ENCODE measurements at regions of chr16 and their contacts with region 1.

Region 1: GRCh38 chr16:50152807-50153452 is at the start of gene TENT4B:
- DNase-seq: peak; percentile 79
- H3K4me3 ChIP-seq: peak within 1 kb of the TSS; percentile 69 to 99 (median 95)
- H3K27ac ChIP-seq: peak within 1 kb of the TSS; percentile 87
- H3K4me1 ChIP-seq: peaks cover 16% of the 10 kb centered on the region
- H3K27me3 ChIP-seq: no peaks in the 10 kb centered on the region
- CTCF ChIP-seq: no peak
- total RNA-seq, gene TENT4B: 10.3 to 14.5 TPM

Region 2: DNA sequence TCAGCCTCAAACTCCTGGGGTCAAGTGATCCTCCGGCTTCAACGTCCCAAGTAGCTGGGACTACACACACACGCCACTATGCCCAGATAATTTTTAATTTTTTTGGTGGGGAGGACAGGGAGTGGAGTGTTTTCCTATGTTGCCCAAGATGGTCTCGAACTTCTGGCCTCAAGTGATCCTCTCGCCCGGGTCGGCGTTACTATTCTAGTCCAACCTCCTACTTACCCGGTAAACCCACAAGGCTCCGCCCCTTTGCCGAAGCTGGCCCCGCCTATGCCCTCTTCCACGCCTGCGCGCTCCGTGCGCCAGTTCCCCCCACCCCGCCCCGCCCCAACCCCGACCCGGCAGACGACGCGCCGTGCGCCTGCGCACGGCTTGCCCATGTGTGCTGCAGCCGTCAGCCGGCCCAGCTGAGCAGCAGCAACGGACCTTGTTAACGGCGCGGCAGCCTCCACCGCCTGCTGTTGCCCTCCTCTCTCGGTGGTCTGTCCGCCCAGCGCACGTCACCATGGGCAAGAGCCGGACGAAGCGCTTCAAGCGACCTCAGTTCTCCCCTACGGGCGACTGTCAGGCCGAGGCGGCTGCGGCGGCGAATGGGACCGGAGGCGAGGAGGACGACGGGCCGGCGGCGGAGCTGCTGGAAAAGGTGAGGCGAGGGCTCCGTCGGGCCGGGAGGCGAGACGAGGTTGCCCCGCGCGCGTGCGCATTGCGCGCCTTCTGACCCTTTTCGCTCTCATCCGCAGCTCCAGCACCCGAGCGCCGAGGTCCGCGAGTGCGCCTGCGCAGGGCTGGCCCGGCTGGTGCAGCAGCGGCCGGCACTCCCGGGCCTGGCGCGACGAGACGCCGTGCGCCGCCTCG is 87.1 kb before region 1 on chr16 and contains the start of gene HEATR3:
- CTCF ChIA-PET with region 1: no interaction called
- dilution Hi-C with region 1: no loop called
- in situ Hi-C with region 1: no loop called
- intact Hi-C with region 1: loop called (anchors 1 kb)
- DNase-seq: peak; percentile 84
- H3K4me3 ChIP-seq: peak within 1 kb of the TSS; percentile 87 to 100 (median 99)
- H3K27ac ChIP-seq: peak within 1 kb of the TSS; percentile 65
- H3K4me1 ChIP-seq: peaks cover 15% of the 10 kb centered on the region
- H3K27me3 ChIP-seq: no peaks in the 10 kb centered on the region
- CTCF ChIP-seq: no peak
- total RNA-seq, gene HEATR3: 18.7 to 23.8 TPM

Region 3: GRCh38 chr16:50102051-50102746 is 50.7 kb before region 1 on chr16:
- CTCF ChIA-PET with region 1: no interaction called
- dilution Hi-C with region 1: no loop called
- in situ Hi-C with region 1: no loop called
- intact Hi-C with region 1: loop called (anchors 2 kb)
- DNase-seq: peak; percentile 58
- H3K4me3 ChIP-seq: no peak overlapping the region
- H3K27ac ChIP-seq: peak overlapping the region; percentile 24
- H3K4me1 ChIP-seq: peaks cover 17% of the 10 kb centered on the region
- H3K27me3 ChIP-seq: no peaks in the 10 kb centered on the region
- CTCF ChIP-seq: no peak

Region 4: GRCh38 chr16:50202926-50203624 is 50.1 kb after region 1 on chr16:
- CTCF ChIA-PET with region 1: no interaction called
- dilution Hi-C with region 1: loop called (anchors 10 kb)
- in situ Hi-C with region 1: no loop called
- intact Hi-C with region 1: loop called (anchors 2 kb)
- DNase-seq: peak; percentile 82
- H3K4me3 ChIP-seq: peak overlapping the region in 2 of 3 experiments; percentile 28 to 36
- H3K27ac ChIP-seq: peak overlapping the region; percentile 98
- H3K4me1 ChIP-seq: peaks cover 44% of the 10 kb centered on the region
- H3K27me3 ChIP-seq: no peaks in the 10 kb centered on the region
- CTCF ChIP-seq: no peak

Region 5: DNA sequence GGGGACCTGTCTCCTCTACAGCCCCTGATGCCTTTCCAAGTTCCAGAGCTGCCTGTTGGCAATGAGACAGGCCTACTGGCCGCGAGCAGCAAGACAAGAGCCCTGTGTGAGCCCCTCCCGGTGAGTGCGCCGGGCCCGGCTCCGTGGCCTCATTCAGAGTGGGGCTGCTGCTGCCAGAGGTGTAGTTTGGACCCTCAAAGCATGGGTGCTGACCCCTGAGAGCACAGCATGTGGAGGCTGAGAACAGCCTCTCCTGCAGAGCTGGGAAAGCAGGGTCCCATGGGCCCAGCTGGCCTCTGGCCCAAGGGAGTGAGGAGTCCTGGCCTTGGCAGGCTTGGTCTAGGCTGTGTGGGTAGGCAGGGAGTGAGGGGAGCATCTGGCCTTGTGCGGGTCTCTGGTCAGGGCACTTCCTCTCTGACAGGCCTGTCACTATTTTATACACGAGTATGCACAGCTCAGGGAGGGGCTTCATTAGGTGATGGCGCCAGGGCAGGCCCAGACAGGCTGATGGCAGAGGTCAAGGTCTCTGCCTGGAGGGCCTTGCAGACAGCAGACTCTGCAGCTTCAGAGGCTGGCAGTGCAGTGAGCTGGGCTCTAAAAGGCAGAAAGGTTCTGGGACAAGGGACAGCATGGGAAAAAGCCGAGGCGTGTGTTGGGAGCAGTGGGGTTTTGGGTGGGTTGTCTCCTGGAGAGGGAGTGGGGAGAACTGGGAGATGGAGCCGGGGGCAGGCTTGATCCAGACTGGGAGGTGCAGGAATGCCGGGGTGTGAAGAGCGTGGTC is 156.8 kb after region 1 on chr16:
- CTCF ChIA-PET with region 1: no interaction called
- dilution Hi-C with region 1: no loop called
- in situ Hi-C with region 1: no loop called
- intact Hi-C with region 1: no loop called
- DNase-seq: no peak
- H3K4me3 ChIP-seq: no peak overlapping the region
- H3K27ac ChIP-seq: no peak overlapping the region
- H3K4me1 ChIP-seq: peaks cover 6% of the 10 kb centered on the region
- H3K27me3 ChIP-seq: no peaks in the 10 kb centered on the region
- CTCF ChIP-seq: no peak